ENCODE measurements at regions of chr1 and their contacts with region 1.

Region 1: GRCh38 chr1:40691538-40692428 is at the start of gene NFYC:
- DNase-seq: peak; percentile 88 to 99 (median 92)
- ATAC-seq: peak; percentile 83
- H3K4me3 ChIP-seq: peak within 1 kb of the TSS; percentile 96
- H3K4me3 Mint-ChIP-seq: peak within 1 kb of the TSS; percentile 91
- H3K27ac ChIP-seq: peak within 1 kb of the TSS; percentile 98 to 100
- H3K27ac Mint-ChIP-seq: peak within 1 kb of the TSS; percentile 92
- H3K4me1 ChIP-seq: peaks cover 33% of the 10 kb centered on the region
- H3K4me1 Mint-ChIP-seq: peaks cover 73% of the 10 kb centered on the region
- H3K27me3 ChIP-seq: no peaks in the 10 kb centered on the region
- H3K27me3 Mint-ChIP-seq: no peaks in the 10 kb centered on the region
- CTCF ChIP-seq: no peak
- total RNA-seq, gene NFYC: 28.6 to 35.2 TPM

Region 2: GRCh38 chr1:40040511-40041465 is 651.0 kb before region 1 on chr1 and contains the start of gene CAP1:
- CTCF ChIA-PET with region 1: no interaction called
- POLR2A ChIA-PET with region 1: interaction called, 3 read pairs
- intact Hi-C with region 1: loop called in 1 of 2 experiments (anchors 10 kb)
- DNase-seq: peak; percentile 99 to 100 (median 100)
- ATAC-seq: peak; percentile 88
- H3K4me3 ChIP-seq: peak within 1 kb of the TSS; percentile 100
- H3K4me3 Mint-ChIP-seq: peak within 1 kb of the TSS; percentile 98
- H3K27ac ChIP-seq: peak within 1 kb of the TSS; percentile 88 to 93
- H3K27ac Mint-ChIP-seq: peak within 1 kb of the TSS; percentile 95
- H3K4me1 ChIP-seq: peaks cover 77% of the 10 kb centered on the region
- H3K4me1 Mint-ChIP-seq: peaks cover 83% of the 10 kb centered on the region
- H3K27me3 ChIP-seq: no peaks in the 10 kb centered on the region
- H3K27me3 Mint-ChIP-seq: no peaks in the 10 kb centered on the region
- CTCF ChIP-seq: no peak
- total RNA-seq, gene CAP1: 121 to 126 TPM

Region 3: GRCh38 chr1:40595623-40596022 is 96.2 kb before region 1 on chr1:
- CTCF ChIA-PET with region 1: no interaction called
- POLR2A ChIA-PET with region 1: no interaction called
- intact Hi-C with region 1: no loop called
- DNase-seq: no peak
- ATAC-seq: no peak
- H3K4me3 ChIP-seq: no peak overlapping the region
- H3K4me3 Mint-ChIP-seq: no peak overlapping the region
- H3K27ac ChIP-seq: no peak overlapping the region
- H3K27ac Mint-ChIP-seq: no peak overlapping the region
- H3K4me1 ChIP-seq: no peaks in the 10 kb centered on the region
- H3K4me1 Mint-ChIP-seq: peaks cover 6% of the 10 kb centered on the region
- H3K27me3 ChIP-seq: peaks cover 0 to 2% of the 10 kb centered on the region in 2 experiments
- H3K27me3 Mint-ChIP-seq: peaks cover 7% of the 10 kb centered on the region
- CTCF ChIP-seq: no peak

Region 4: GRCh38 chr1:40668769-40669525 is 22.8 kb before region 1 on chr1:
- CTCF ChIA-PET with region 1: interaction called, 9 read pairs
- POLR2A ChIA-PET with region 1: interaction called, 34 read pairs
- intact Hi-C with region 1: loop called in 1 of 2 experiments (anchors 2 kb)
- DNase-seq: peak; percentile 72 to 91 (median 82)
- ATAC-seq: peak; percentile 78
- H3K4me3 ChIP-seq: peak overlapping the region; percentile 36
- H3K4me3 Mint-ChIP-seq: peak overlapping the region; percentile 69
- H3K27ac ChIP-seq: no peak overlapping the region
- H3K27ac Mint-ChIP-seq: no peak overlapping the region
- H3K4me1 ChIP-seq: peaks cover 23% of the 10 kb centered on the region
- H3K4me1 Mint-ChIP-seq: peaks cover 20% of the 10 kb centered on the region
- H3K27me3 ChIP-seq: no peaks in the 10 kb centered on the region
- H3K27me3 Mint-ChIP-seq: no peaks in the 10 kb centered on the region
- CTCF ChIP-seq: peak; percentile 94

Region 5: GRCh38 chr1:40722636-40723035 is 30.9 kb after region 1 on chr1:
- CTCF ChIA-PET with region 1: interaction called, 4 read pairs
- POLR2A ChIA-PET with region 1: interaction called, 33 read pairs
- intact Hi-C with region 1: no loop called
- DNase-seq: no peak
- ATAC-seq: no peak
- H3K4me3 ChIP-seq: no peak overlapping the region
- H3K4me3 Mint-ChIP-seq: no peak overlapping the region
- H3K27ac ChIP-seq: no peak overlapping the region
- H3K27ac Mint-ChIP-seq: no peak overlapping the region
- H3K4me1 ChIP-seq: peaks cover 12% of the 10 kb centered on the region
- H3K4me1 Mint-ChIP-seq: peaks cover 64% of the 10 kb centered on the region
- H3K27me3 ChIP-seq: no peaks in the 10 kb centered on the region
- H3K27me3 Mint-ChIP-seq: no peaks in the 10 kb centered on the region
- CTCF ChIP-seq: no peak

Region 6: DNA sequence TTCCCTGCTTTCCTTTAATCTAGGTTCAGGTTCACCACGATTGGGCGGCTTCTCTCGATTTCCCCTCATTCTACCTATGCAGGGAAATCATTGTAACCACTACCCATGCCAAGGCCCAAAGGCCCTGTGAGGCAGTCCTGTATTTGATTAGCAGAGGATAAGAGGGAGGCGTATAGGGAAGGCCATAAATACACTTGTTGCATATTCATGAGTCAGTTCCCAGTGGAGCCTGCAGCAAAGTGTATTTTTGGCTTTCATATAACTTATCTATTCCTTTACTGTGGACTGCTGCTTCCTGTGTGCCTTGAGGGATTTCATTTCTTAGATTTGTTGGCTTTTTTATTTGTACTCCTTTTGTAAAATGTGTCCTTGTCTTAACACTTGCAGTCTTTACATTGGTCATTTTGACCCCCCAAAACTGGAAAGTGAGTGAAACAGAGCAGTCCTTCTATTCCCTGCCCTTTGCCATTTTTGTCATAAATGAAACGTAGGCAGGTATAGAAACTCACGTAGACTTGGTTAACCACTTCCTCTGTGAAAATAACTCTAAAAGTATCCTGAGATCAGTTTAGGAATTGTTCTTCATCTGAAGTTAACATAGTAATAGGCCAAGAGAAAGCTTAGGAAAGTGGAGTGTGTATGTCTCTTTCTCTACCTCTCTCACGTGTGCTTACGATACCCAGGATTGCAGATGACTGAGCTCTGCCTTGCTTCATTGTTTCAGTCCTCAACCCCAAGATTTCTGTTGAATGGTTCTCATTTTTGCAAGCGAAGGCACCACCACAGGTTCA is 72.2 kb after region 1 on chr1:
- CTCF ChIA-PET with region 1: no interaction called
- POLR2A ChIA-PET with region 1: interaction called, 12 read pairs
- intact Hi-C with region 1: no loop called
- DNase-seq: peak in 2 of 14 experiments; percentile 15 to 49
- ATAC-seq: peak; percentile 79
- H3K4me3 ChIP-seq: no peak overlapping the region
- H3K4me3 Mint-ChIP-seq: peak overlapping the region; percentile 39
- H3K27ac ChIP-seq: peak overlapping the region in 1 of 2 donors; percentile 23
- H3K27ac Mint-ChIP-seq: peak overlapping the region; percentile 69
- H3K4me1 ChIP-seq: peaks cover 33% of the 10 kb centered on the region
- H3K4me1 Mint-ChIP-seq: peaks cover 43% of the 10 kb centered on the region
- H3K27me3 ChIP-seq: no peaks in the 10 kb centered on the region
- H3K27me3 Mint-ChIP-seq: no peaks in the 10 kb centered on the region
- CTCF ChIP-seq: no peak

Region 7: GRCh38 chr1:40862008-40862863 is 170.5 kb after region 1 on chr1 and contains the start of gene CITED4:
- CTCF ChIA-PET with region 1: no interaction called
- POLR2A ChIA-PET with region 1: interaction called, 96 read pairs
- intact Hi-C with region 1: loop called in 1 of 2 experiments (anchors 2 kb)
- DNase-seq: peak; percentile 93 to 99 (median 97)
- ATAC-seq: peak; percentile 94
- H3K4me3 ChIP-seq: peak within 1 kb of the TSS; percentile 82
- H3K4me3 Mint-ChIP-seq: peak within 1 kb of the TSS; percentile 95
- H3K27ac ChIP-seq: peak within 1 kb of the TSS; percentile 45 to 67
- H3K27ac Mint-ChIP-seq: peak within 1 kb of the TSS; percentile 96
- H3K4me1 ChIP-seq: peaks cover 20% of the 10 kb centered on the region
- H3K4me1 Mint-ChIP-seq: peaks cover 24% of the 10 kb centered on the region
- H3K27me3 ChIP-seq: no peaks in the 10 kb centered on the region
- H3K27me3 Mint-ChIP-seq: no peaks in the 10 kb centered on the region
- CTCF ChIP-seq: no peak
- total RNA-seq, gene CITED4: 51.6 to 52.0 TPM

Measured in CD4-positive, alpha-beta T cell (primary cell).